Activated CD4-positive, alpha-beta memory T cell treated with anti-CD3 and anti-CD28 coated beads for 36 hours (primary cell): ENCODE measurements at regions of chr1 and their contacts with region 1.

Region 1: GRCh38 chr1:156910309-156910782 is 10.1 kb upstream of the LRRC71 start:
- DNase-seq: peak; percentile 70
- H3K4me3 Mint-ChIP-seq: no peak overlapping the region
- H3K27ac Mint-ChIP-seq: no peak overlapping the region
- H3K4me1 Mint-ChIP-seq: peaks cover 2% of the 10 kb centered on the region
- H3K27me3 Mint-ChIP-seq: peaks cover 18% of the 10 kb centered on the region

Region 2: DNA sequence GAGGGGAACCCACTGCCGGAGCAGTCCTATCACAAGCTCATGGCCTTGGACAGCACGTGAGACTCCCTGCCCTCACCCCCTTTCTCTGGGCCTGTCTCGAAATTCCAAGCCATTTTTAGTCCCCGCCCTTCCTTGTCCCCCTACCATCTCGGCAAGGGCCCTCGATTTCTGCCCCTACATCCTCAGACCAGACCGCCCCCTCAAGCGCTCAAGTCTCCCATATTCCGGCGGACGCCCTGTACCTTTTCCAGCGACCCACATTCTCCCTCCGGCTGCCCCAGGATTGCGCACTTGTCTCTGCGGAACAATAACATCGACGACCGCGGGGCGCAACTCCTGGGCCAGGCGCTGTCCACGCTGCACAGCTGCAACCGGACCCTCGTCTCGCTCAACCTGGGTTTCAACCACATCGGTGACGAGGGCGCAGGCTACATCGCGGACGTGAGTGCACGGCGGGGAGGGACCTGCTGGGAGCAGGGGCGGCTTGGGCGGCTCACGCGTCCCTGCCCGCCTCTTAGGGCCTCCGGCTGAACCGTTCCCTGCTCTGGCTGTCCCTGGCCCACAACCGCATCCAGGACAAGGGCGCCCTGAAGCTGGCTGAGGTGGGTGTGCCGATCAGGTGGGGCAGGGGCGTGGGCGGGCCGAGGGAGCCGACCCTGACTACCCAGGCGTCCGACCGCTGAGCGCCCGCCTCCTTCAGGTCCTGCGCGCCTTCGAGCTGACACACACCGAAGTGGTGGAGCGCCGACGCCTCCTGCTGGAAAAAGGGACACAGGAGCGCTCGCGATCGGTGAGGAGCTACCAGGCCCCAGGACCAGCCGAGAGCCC is 17.1 kb after region 1 on chr1:
- CTCF ChIA-PET with region 1: interaction called, 19 read pairs
- POLR2A ChIA-PET with region 1: no interaction called
- intact Hi-C with region 1: no loop called
- DNase-seq: peak; percentile 79
- H3K4me3 Mint-ChIP-seq: no peak overlapping the region
- H3K27ac Mint-ChIP-seq: no peak overlapping the region
- H3K4me1 Mint-ChIP-seq: peaks cover 16% of the 10 kb centered on the region
- H3K27me3 Mint-ChIP-seq: peaks cover 75% of the 10 kb centered on the region

Region 3: DNA sequence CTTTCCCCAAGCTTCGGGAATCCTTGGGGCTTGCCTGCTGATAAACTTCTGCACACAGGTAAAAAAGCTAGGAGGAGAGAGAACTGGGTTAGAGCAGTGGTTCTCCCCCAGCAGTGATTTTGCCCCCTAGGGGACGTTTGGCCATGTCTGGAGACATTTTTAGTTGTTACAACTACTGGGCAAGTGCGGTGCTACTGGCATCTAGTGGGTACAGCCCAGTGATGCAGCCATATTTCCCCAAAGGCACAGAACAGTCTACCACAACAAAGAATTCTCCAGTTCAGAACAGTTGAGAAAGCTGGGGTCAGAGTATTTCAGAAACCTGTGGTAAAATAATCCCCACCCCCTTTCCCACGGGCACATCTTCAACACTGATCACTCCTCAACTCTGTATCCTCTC is 51.4 kb after region 1 on chr1:
- CTCF ChIA-PET with region 1: no interaction called
- POLR2A ChIA-PET with region 1: no interaction called
- intact Hi-C with region 1: loop called (anchors 2 kb)
- DNase-seq: peak; percentile 51
- H3K4me3 Mint-ChIP-seq: no peak overlapping the region
- H3K27ac Mint-ChIP-seq: no peak overlapping the region
- H3K4me1 Mint-ChIP-seq: peaks cover 23% of the 10 kb centered on the region
- H3K27me3 Mint-ChIP-seq: no peaks in the 10 kb centered on the region